H1 (cell line): ENCODE measurements at regions of chr9 and their contacts with region 1.

Region 1: GRCh38 chr9:108412755-108413154 is 443.0 kb downstream of the ACTL7B start:
- DNase-seq: peak; percentile 50 to 70
- H3K4me3 ChIP-seq: no peak overlapping the region
- H3K27ac ChIP-seq: no peak overlapping the region
- H3K4me1 ChIP-seq: no peaks in the 10 kb centered on the region
- H3K27me3 ChIP-seq: no peaks in the 10 kb centered on the region
- CTCF ChIP-seq: peak; percentile 57 to 74 (median 68)
- EP300 ChIP-seq: no peak
- POLR2A ChIP-seq: no peak
- RAD21 ChIP-seq: peak; percentile 65 to 67

Region 2: DNA sequence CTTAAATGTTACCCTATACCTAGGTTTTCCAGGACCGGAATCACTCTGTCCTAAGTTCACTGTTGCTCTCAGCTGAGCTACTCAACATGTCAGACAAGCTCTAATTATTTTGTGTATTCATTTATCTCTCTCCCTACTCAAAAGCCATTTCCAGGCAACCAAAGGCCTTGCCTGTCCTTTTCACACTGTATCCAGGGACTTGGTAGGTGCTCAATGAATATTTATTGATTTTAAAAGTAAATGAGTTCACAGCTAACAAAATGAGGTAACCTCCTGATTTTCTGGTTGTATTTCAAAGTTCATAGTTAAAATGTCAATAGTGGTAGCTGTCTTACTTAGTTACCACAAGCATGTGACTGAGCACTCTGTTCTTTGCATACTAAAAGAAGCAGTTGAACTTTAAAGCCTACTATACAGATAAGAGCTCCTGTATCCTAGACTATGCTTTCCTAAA is 79.2 kb before region 1 on chr9:
- CTCF ChIA-PET with region 1: interaction called, 12 read pairs
- POLR2A ChIA-PET with region 1: no interaction called
- DNase-seq: no peak
- H3K4me3 ChIP-seq: no peak overlapping the region
- H3K27ac ChIP-seq: no peak overlapping the region
- H3K4me1 ChIP-seq: peaks cover 0 to 5% (median 3%) of the 10 kb centered on the region in 4 experiments; a peak in 3 of 7 replicates
- H3K27me3 ChIP-seq: no peaks in the 10 kb centered on the region
- CTCF ChIP-seq: no peak
- EP300 ChIP-seq: no peak
- POLR2A ChIP-seq: no peak
- RAD21 ChIP-seq: no peak

Region 3: GRCh38 chr9:108400297-108401064 is 12.3 kb before region 1 on chr9:
- CTCF ChIA-PET with region 1: interaction called, 17 read pairs
- POLR2A ChIA-PET with region 1: no interaction called
- DNase-seq: no peak
- H3K4me3 ChIP-seq: no peak overlapping the region
- H3K27ac ChIP-seq: no peak overlapping the region
- H3K4me1 ChIP-seq: no peaks in the 10 kb centered on the region
- H3K27me3 ChIP-seq: no peaks in the 10 kb centered on the region
- CTCF ChIP-seq: peak in 1 of 3 experiments; percentile 12; a peak in 1 of 4 replicates
- EP300 ChIP-seq: no peak
- POLR2A ChIP-seq: no peak
- RAD21 ChIP-seq: no peak

Region 4: DNA sequence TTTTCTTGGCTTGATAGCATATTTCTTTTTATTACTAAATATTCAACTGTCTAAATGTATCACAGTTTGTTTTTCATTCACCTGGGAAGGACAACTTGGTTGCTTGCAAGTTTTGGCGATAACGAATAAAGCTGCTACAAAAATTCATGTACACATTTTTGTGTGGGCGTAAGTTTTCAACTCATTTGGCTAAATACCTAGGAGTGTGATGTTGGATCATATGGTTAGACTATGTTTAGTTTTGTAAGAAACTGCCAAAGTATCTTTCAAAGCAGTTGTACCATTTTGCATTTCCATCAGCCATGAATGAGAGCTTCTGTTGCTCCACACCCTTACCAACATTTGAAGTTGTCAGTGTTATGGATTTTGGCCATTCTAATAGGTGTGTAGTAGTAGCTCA is 15.0 kb after region 1 on chr9:
- CTCF ChIA-PET with region 1: interaction called, 16 read pairs
- POLR2A ChIA-PET with region 1: no interaction called
- DNase-seq: no peak
- H3K4me3 ChIP-seq: no peak overlapping the region
- H3K27ac ChIP-seq: no peak overlapping the region
- H3K4me1 ChIP-seq: no peaks in the 10 kb centered on the region
- H3K27me3 ChIP-seq: no peaks in the 10 kb centered on the region
- CTCF ChIP-seq: no peak
- EP300 ChIP-seq: no peak
- POLR2A ChIP-seq: no peak
- RAD21 ChIP-seq: no peak

Region 5: GRCh38 chr9:108551030-108551838 is 138.5 kb after region 1 on chr9:
- CTCF ChIA-PET with region 1: no interaction called
- POLR2A ChIA-PET with region 1: no interaction called
- DNase-seq: no peak
- H3K4me3 ChIP-seq: no peak overlapping the region
- H3K27ac ChIP-seq: no peak overlapping the region
- H3K4me1 ChIP-seq: no peaks in the 10 kb centered on the region
- H3K27me3 ChIP-seq: no peaks in the 10 kb centered on the region
- CTCF ChIP-seq: no peak
- EP300 ChIP-seq: no peak
- POLR2A ChIP-seq: no peak
- RAD21 ChIP-seq: no peak